ENCODE measurements at regions of chr4 and their contacts with region 1.

Region 1: DNA sequence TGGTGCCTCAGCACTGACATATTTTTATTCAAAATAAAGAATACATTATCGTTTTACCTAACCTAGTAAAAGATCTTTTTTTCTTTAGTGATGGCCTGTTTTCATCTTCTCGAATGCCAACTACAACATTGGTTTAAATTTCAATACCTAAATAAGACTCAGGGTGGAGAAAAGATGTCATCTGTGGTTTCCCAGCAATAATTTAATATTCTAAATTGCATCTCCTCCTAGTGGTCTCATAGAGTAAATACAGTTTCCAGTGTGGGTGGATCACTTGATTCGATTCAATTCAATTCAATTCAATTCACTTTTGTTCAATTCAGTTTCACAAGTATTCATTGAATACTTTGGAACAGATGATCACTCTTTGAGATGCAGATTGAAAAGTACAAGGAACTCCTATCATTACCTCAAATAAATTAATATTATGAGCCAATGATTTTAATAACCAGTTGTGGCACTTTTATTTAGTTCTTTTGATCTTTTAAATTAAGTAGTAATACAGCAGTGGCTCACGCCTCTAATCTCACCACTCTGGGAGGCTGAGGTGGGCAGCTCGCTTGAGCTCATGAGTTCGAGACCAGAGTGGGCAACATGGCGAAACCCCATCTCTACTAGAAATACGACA is 427.2 kb downstream of the FAT4 start:
- DNase-seq: no peak
- ATAC-seq: peak; percentile 56
- H3K4me3 ChIP-seq: no peak overlapping the region
- H3K27ac ChIP-seq: no peak overlapping the region
- H3K4me1 ChIP-seq: no peaks in the 10 kb centered on the region
- H3K27me3 ChIP-seq: no peaks in the 10 kb centered on the region
- CTCF ChIP-seq: peak; percentile 21 to 63 (median 52)
- POLR2A ChIP-seq: no peak

Region 2: DNA sequence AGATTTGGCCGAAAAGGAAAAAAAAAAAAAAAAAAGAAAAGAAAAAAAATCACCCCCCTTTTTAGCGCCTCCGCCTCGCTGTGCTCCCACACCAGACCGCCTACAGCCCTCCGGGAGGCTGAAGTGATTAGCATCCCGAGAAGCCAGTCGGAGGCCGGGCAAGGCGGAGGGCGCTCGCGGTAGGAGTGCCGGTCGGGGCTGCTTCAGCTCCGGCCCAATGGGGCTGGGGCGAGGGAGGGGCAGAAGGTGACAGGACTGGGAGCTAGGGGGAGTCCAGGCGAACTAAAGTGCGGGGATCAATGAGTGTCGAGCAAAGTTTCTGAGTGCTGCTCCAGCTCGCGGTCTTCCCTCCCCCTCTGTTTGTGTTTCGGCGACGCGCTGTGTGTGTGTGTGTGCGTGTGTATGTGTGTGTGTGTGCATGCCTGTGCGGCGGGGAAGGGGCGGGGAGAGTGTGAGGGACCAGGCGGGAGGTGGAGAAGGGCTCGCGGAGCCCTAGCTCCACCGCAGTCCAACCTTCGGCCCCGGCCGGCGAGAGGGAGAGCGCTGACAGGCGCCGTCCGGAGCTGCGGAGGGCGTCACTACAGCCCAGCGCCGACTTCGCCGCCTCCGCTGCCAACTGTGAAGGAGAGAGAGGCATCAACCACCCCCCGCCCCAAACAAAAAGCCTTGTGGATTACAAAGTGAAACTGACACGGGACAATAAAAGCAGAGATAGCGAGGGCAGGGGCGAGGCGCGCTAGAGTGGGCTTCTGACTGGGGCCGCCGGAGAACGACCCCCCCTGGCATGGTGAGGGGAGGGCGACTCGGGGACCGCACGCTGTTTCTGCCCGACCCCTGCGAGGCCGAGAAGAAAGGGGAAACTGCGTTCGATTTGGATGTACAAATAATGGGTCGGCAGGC is 427.0 kb before region 1 on chr4 and contains the start of gene FAT4:
- intact Hi-C with region 1: loop called (anchors 10 kb)
- DNase-seq: peak; percentile 86 to 92 (median 89)
- ATAC-seq: peak; percentile 90
- H3K4me3 ChIP-seq: peak within 1 kb of the TSS; percentile 73 to 88
- H3K27ac ChIP-seq: peak within 1 kb of the TSS; percentile 23 to 80 (median 74)
- H3K4me1 ChIP-seq: peaks cover 28% of the 10 kb centered on the region
- H3K27me3 ChIP-seq: no peaks in the 10 kb centered on the region
- CTCF ChIP-seq: peak in 4 of 7 experiments; percentile 14 to 41 (median 33)
- POLR2A ChIP-seq: peak in 2 of 3 donors; percentile 70 to 75
- total RNA-seq, gene FAT4: 3.3 to 3.6 TPM

Measured in body of pancreas (tissue), 4 donors.